A549 (cell line): ENCODE measurements at regions of chr6 and their contacts with region 1.

Region 1: DNA sequence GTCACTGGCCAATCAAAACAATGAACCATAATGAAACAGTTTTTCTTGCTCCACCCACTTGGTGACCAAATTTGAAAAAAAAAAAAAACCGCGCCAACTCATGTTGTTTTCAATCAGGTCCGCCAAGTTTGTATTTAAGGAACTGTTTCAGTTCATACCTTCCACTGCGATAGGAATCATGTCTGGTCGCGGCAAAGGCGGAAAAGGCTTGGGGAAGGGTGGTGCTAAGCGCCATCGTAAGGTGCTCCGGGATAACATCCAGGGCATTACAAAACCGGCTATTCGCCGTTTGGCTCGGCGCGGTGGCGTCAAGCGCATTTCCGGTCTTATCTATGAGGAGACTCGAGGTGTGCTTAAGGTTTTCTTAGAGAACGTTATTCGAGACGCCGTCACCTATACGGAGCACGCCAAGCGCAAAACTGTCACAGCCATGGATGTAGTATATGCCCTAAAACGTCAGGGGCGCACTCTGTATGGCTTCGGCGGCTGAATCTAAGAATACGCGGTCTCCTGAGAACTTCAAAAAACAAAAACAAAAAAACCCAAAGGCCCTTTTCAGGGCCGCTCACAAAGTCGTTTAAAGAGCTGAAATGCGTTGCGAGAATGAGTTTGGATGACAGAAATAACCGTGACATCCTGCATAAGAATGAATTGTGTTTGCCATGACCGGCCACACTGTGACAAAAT is 16.7 kb downstream of the HFE start:
- DNase-seq: peak; percentile 57 to 93
- ATAC-seq: peak; percentile 88 to 93
- H3K4me3 ChIP-seq: peak overlapping the region; percentile 43
- H3K27ac ChIP-seq: peak overlapping the region; percentile 87 to 92
- H3K4me1 ChIP-seq: peaks cover 19% of the 10 kb centered on the region
- CTCF ChIP-seq: peak; percentile 18; the same call in 2 of the 3 replicates
- EP300 ChIP-seq: peak; percentile 51 to 56; a peak in 2 of 5 replicates
- POLR2A ChIP-seq: peak; percentile 99
- RAD21 ChIP-seq: 0 out of 5 replicates have a peak, but pooled peaks have one; percentile 11 to 14

Region 2: GRCh38 chr6:26054857-26055669 is 48.9 kb before region 1 on chr6:
- CTCF ChIA-PET with region 1: interaction called, 580 read pairs
- POLR2A ChIA-PET with region 1: interaction called, 22 read pairs
- DNase-seq: peak; percentile 70 to 91
- ATAC-seq: peak; percentile 68 to 83
- H3K4me3 ChIP-seq: peak overlapping the region; percentile 76
- H3K27ac ChIP-seq: peak overlapping the region; percentile 95 to 100
- H3K4me1 ChIP-seq: peaks cover 19% of the 10 kb centered on the region
- CTCF ChIP-seq: no peak
- EP300 ChIP-seq: no peak
- POLR2A ChIP-seq: peak; percentile 66
- RAD21 ChIP-seq: no peak; a peak in 1 of 5 replicates

Region 3: GRCh38 chr6:26065952-26066380 is 37.9 kb before region 1 on chr6:
- CTCF ChIA-PET with region 1: interaction called, 580 read pairs
- POLR2A ChIA-PET with region 1: interaction called, 10 read pairs
- DNase-seq: peak; percentile 60 to 88
- ATAC-seq: peak; percentile 90 to 92
- H3K4me3 ChIP-seq: peak overlapping the region; percentile 30
- H3K27ac ChIP-seq: peak overlapping the region; percentile 84 to 85
- H3K4me1 ChIP-seq: peaks cover 20% of the 10 kb centered on the region
- CTCF ChIP-seq: peak; percentile 89
- EP300 ChIP-seq: no peak
- POLR2A ChIP-seq: no peak
- RAD21 ChIP-seq: peak; percentile 89 to 92

Region 4: GRCh38 chr6:26087284-26088115 is 16.4 kb before region 1 on chr6 and contains the start of gene HFE:
- CTCF ChIA-PET with region 1: interaction called, 56 read pairs
- POLR2A ChIA-PET with region 1: interaction called, 14 read pairs
- DNase-seq: peak; percentile 24 to 48
- ATAC-seq: peak; percentile 80 to 83
- H3K4me3 ChIP-seq: peak within 1 kb of the TSS; percentile 67
- H3K27ac ChIP-seq: peak within 1 kb of the TSS; percentile 86 to 91
- H3K4me1 ChIP-seq: peaks cover 17% of the 10 kb centered on the region; the same call in 2 of the 3 replicates
- CTCF ChIP-seq: no peak
- EP300 ChIP-seq: no peak
- POLR2A ChIP-seq: peak; percentile 8; the same call in 1 of the 2 replicates
- RAD21 ChIP-seq: no peak
- polyA plus RNA-seq, gene HFE: 31.7 and 35.9 TPM in 2 replicates